HepG2 (cell line): ENCODE measurements at regions of chr5 and their contacts with region 1.

Region 1: DNA sequence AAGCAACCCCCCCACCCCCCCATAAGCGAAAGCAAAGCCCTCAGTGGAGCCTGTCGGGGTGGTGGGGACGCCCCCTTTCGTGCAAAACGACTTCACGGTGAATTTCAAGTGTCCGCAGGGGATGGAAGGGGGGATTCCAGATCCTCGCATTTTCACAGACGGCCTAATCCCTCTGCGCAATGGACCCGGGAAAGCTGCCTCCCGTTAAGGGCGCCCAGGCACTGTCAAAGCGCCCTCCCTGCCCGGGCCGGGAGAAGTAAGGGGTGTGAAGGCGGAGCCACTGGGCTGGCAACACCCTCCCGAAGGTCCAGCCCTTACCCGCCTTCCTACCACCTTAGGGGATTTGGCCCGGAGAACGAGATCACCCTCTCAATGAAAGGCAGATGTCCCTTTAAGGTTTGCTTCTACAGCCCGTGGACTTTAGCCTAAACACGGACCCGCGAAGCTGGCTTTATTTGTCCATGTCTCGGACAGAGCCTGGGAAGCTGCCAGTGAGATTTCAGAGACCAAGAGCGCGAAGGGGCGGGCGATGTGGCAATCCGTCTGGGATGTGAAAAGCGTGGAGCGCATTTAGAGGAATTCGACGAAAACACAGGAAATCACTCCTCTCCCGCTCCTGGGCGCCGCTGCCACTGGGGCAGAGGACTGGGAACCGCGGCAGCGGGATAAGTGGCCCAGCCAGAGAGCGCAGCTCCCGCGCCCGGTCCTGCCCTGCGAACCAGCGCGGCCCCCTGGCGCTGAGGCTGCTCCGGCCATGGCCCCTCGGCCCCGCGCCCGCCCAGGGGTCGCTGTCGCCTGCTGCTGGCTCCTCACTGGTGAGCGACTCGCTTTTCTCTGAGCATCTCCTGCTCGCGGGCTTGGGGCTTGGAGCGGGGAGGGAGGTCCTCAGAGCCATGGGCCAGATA is at the starts of genes ITGA1 and PELO:
- DNase-seq: peak; percentile 86
- ATAC-seq: peak; percentile 92
- H3K4me3 ChIP-seq: peak within 1 kb of the TSS; percentile 76 to 92 (median 77)
- H3K27ac ChIP-seq: peak within 1 kb of the TSS; percentile 73
- H3K4me1 ChIP-seq: peaks cover 48% of the 10 kb centered on the region
- H3K27me3 ChIP-seq: no peaks in the 10 kb centered on the region; a peak in 1 of 5 replicates
- CTCF ChIP-seq: peak; percentile 86
- EP300 ChIP-seq: no peak; a peak in 1 of 4 replicates
- POLR2A ChIP-seq: peak; percentile 35 to 61; a peak in 3 of 4 replicates
- RAD21 ChIP-seq: peak; percentile 90
- total RNA-seq, gene ITGA1: 11.6 and 23.1 TPM in 2 replicates
- total RNA-seq, gene PELO: 19.0 and 19.5 TPM in 2 replicates

Region 2: DNA sequence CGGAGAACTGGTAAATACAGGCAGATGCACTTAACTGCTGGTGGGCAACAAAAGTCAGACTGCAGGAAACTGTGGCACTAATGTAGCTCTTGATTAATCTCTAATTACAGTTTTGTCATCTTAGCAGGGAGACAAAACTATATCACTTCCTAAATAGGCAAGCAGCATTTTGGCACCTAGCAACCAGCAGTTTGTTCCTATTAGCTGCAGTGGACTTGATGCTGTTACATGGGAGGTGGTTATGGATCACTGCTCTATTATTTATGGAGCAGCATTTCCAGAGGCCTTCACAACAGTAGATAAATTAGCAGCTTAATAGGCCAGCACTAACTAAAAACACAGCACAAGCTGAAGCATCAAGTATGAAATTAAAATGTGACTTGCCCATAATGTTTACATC is 518.5 kb before region 1 on chr5:
- CTCF ChIA-PET with region 1: no interaction called
- POLR2A ChIA-PET with region 1: no interaction called
- in situ Hi-C with region 1: no loop called
- intact Hi-C with region 1: no loop called
- DNase-seq: no peak
- ATAC-seq: no peak
- H3K4me3 ChIP-seq: no peak overlapping the region
- H3K27ac ChIP-seq: no peak overlapping the region
- H3K4me1 ChIP-seq: no peaks in the 10 kb centered on the region
- H3K27me3 ChIP-seq: no peaks in the 10 kb centered on the region
- CTCF ChIP-seq: no peak
- EP300 ChIP-seq: no peak
- POLR2A ChIP-seq: no peak
- RAD21 ChIP-seq: no peak

Region 3: GRCh38 chr5:52693280-52693679 is 94.6 kb before region 1 on chr5:
- CTCF ChIA-PET with region 1: no interaction called
- POLR2A ChIA-PET with region 1: no interaction called
- in situ Hi-C with region 1: no loop called
- intact Hi-C with region 1: loop called (anchors 1 kb)
- DNase-seq: peak; percentile 30
- ATAC-seq: peak; percentile 83
- H3K4me3 ChIP-seq: no peak overlapping the region
- H3K27ac ChIP-seq: no peak overlapping the region
- H3K4me1 ChIP-seq: no peaks in the 10 kb centered on the region
- H3K27me3 ChIP-seq: peaks cover 0 to 8% of the 10 kb centered on the region in 2 experiments; a peak in 2 of 5 replicates
- CTCF ChIP-seq: peak; percentile 66
- EP300 ChIP-seq: no peak
- POLR2A ChIP-seq: no peak
- RAD21 ChIP-seq: no peak

Region 4: DNA sequence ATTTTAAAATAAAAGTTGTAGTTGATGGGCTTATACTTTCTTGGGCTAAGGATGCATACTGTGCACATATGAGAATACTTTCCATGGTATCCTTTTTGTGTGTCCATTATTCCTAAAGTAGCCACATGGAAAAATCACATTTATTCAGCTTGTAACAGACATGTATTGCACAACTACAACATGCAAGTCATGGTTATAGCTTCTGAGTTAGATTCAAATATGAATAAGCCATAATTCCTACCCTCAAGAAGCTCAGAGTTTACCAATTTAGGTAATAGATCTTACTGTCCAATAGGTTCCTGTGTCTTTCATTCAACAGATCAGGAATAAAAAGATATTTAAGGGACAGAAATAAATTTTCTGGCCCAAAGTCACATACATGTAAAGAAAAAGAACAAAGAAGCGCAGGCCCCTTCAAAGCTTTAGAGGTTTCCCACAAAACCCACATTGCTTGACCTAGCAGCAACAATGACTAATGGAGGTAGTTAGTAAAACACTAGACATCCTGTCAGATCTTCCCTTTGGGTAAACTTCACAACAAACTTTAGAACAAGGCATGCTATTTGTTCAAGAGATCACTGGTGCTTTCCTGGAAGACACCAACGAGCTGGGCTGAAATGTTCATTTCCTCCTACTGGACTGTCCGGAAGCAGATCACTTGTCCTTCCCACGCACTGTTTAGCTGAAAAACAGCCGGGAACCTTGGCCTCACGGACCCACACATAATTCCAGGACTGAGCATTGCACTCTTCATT is 78.5 kb before region 1 on chr5:
- CTCF ChIA-PET with region 1: no interaction called
- POLR2A ChIA-PET with region 1: interaction called, 9 read pairs
- in situ Hi-C with region 1: loop called (anchors 5 kb)
- intact Hi-C with region 1: loop called (anchors 2 kb)
- DNase-seq: peak; percentile 88
- ATAC-seq: peak; percentile 94
- H3K4me3 ChIP-seq: peak overlapping the region in 2 of 3 experiments; percentile 3 to 37; a peak in 4 of 6 replicates
- H3K27ac ChIP-seq: peak overlapping the region; percentile 70
- H3K4me1 ChIP-seq: peaks cover 65% of the 10 kb centered on the region
- H3K27me3 ChIP-seq: no peaks in the 10 kb centered on the region
- CTCF ChIP-seq: no peak
- EP300 ChIP-seq: peak in 1 of 2 experiments; percentile 91; a peak in 2 of 4 replicates
- POLR2A ChIP-seq: no peak
- RAD21 ChIP-seq: no peak

Region 5: GRCh38 chr5:52799983-52800393 is 12.1 kb after region 1 on chr5:
- CTCF ChIA-PET with region 1: no interaction called
- POLR2A ChIA-PET with region 1: interaction called, 79 read pairs
- in situ Hi-C with region 1: no loop called
- intact Hi-C with region 1: loop called (anchors 1 kb)
- DNase-seq: peak; percentile 86
- ATAC-seq: peak; percentile 86
- H3K4me3 ChIP-seq: peak overlapping the region; percentile 66 to 86 (median 70); a peak in 5 of 6 replicates
- H3K27ac ChIP-seq: peak overlapping the region; percentile 88
- H3K4me1 ChIP-seq: peaks cover 79% of the 10 kb centered on the region
- H3K27me3 ChIP-seq: no peaks in the 10 kb centered on the region; a peak in 1 of 5 replicates
- CTCF ChIP-seq: no peak
- EP300 ChIP-seq: no peak
- POLR2A ChIP-seq: peak; percentile 73 to 85
- RAD21 ChIP-seq: no peak

Region 6: DNA sequence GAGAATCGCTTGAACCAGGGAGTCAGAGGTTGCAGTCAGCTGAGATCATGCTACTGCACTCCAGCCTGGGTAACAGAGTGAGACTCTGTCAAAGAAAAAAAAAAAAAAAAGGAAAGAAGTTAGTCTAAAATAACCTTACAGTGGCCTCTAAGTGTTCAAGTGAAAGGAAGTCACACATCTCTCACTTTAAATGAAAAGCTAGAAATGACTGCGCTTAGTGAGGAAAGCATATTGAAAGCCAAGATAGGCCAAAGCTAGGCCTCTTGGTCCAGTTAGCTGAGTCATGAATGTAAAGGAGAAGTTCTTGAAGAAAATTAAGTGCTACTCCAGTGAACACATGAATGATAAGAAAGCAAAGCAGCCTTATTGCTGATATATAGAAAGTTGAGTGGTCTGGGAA is 38.0 kb after region 1 on chr5:
- CTCF ChIA-PET with region 1: no interaction called
- POLR2A ChIA-PET with region 1: no interaction called
- in situ Hi-C with region 1: no loop called
- intact Hi-C with region 1: no loop called
- DNase-seq: no peak
- ATAC-seq: no peak
- H3K4me3 ChIP-seq: no peak overlapping the region
- H3K27ac ChIP-seq: no peak overlapping the region
- H3K4me1 ChIP-seq: peaks cover 5% of the 10 kb centered on the region; the same call in 1 of the 2 replicates
- H3K27me3 ChIP-seq: no peaks in the 10 kb centered on the region
- CTCF ChIP-seq: no peak
- EP300 ChIP-seq: no peak
- POLR2A ChIP-seq: no peak
- RAD21 ChIP-seq: no peak

Region 7: GRCh38 chr5:52837068-52837467 is 49.2 kb after region 1 on chr5:
- CTCF ChIA-PET with region 1: no interaction called
- POLR2A ChIA-PET with region 1: no interaction called
- in situ Hi-C with region 1: no loop called
- intact Hi-C with region 1: no loop called
- DNase-seq: no peak
- ATAC-seq: no peak
- H3K4me3 ChIP-seq: no peak overlapping the region
- H3K27ac ChIP-seq: no peak overlapping the region
- H3K4me1 ChIP-seq: no peaks in the 10 kb centered on the region
- H3K27me3 ChIP-seq: no peaks in the 10 kb centered on the region
- CTCF ChIP-seq: no peak
- EP300 ChIP-seq: no peak
- POLR2A ChIP-seq: no peak
- RAD21 ChIP-seq: no peak

Region 8: DNA sequence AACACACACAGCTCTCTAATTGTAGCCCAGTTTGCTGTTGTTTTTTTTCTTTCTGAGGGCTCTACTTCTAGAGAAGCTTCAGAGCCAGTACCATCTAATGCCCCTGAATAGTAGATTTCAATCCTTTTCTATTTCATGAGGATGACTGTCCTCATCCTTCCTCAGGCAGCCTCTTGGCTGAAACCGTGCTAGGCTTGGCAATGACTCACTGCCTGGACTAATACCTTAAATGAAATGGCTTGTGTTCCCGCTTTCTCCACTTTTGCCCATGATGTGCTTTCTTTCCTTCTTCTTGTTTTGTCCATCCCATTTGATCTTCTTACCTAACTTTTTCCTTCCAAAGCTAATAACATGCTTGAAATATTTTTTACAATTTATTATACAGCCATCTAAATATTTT is 80.0 kb after region 1 on chr5:
- CTCF ChIA-PET with region 1: no interaction called
- POLR2A ChIA-PET with region 1: no interaction called
- in situ Hi-C with region 1: no loop called
- intact Hi-C with region 1: loop called (anchors 5 kb)
- DNase-seq: no peak
- ATAC-seq: no peak
- H3K4me3 ChIP-seq: no peak overlapping the region
- H3K27ac ChIP-seq: no peak overlapping the region
- H3K4me1 ChIP-seq: peaks cover 9% of the 10 kb centered on the region
- H3K27me3 ChIP-seq: no peaks in the 10 kb centered on the region
- CTCF ChIP-seq: no peak
- EP300 ChIP-seq: no peak
- POLR2A ChIP-seq: no peak
- RAD21 ChIP-seq: no peak

Region 9: DNA sequence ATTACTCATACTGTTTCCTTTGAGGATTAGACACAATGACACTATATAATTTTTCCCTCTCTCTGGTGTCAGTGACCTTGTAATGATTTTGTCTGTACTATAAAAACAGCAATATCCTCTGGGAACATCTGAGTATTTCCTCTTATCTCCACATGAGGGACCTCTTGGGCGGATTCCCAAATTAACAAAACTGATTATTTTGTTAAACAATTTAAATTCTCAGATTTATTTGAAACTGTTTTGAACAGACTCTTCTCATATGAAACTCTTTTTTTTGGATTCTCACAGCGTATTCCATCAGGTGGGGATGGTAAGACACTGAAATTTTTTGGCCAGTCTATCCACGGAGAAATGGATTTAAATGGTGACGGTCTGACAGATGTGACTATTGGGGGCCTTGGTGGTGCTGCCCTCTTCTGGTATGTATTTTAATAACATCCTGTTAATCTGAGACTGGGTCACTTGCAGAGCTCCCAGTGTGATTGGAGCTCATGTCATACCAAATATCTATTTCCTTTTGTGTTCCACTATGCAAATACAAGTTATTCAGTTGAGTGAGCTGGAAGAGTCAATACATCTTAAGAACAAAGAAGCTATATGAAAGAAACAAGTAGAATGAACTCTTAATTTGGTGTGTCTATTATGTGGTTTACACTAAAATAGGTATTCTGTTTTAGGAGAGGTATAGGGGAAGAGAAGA is 127.5 kb after region 1 on chr5:
- CTCF ChIA-PET with region 1: interaction called, 43 read pairs
- POLR2A ChIA-PET with region 1: interaction called, 3 read pairs
- in situ Hi-C with region 1: no loop called
- intact Hi-C with region 1: loop called (anchors 1 kb)
- DNase-seq: peak; percentile 68
- ATAC-seq: peak; percentile 99
- H3K4me3 ChIP-seq: peak overlapping the region; percentile 38 to 62 (median 42); a peak in 4 of 6 replicates
- H3K27ac ChIP-seq: no peak overlapping the region
- H3K4me1 ChIP-seq: no peaks in the 10 kb centered on the region
- H3K27me3 ChIP-seq: no peaks in the 10 kb centered on the region
- CTCF ChIP-seq: peak; percentile 79
- EP300 ChIP-seq: no peak
- POLR2A ChIP-seq: no peak
- RAD21 ChIP-seq: peak; percentile 63; the same call in 1 of the 2 replicates

Region 10: DNA sequence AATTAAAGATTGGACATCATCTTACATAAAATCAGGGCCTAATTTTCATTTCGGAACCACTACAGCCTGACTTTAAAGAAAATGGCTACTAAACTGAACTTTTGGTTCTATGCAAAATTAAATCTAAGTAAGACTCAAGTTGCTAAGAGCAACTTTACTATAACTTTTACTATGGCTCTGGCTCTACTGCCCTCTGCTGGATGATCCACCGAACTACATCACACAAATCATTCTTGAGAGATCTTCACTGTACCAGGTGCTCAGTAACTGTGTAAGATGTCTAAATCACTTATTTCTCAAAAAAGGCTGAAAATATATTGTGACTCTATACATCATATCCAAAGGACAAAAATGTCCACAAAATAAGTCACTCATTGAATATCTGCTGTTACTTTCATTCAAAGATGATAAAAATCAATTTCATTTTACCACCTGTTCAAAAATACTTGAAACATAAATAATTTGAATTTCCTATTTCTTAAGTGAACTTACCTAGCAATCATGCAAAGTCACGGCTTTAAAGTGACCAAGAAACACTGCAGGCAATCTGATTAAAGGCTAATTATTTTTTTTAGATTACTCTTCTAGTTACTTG is 308.2 kb after region 1 on chr5:
- CTCF ChIA-PET with region 1: no interaction called
- POLR2A ChIA-PET with region 1: no interaction called
- in situ Hi-C with region 1: no loop called
- intact Hi-C with region 1: loop called (anchors 5 kb)
- DNase-seq: peak; percentile 56
- ATAC-seq: peak; percentile 31
- H3K4me3 ChIP-seq: no peak overlapping the region
- H3K27ac ChIP-seq: no peak overlapping the region
- H3K4me1 ChIP-seq: peaks cover 27% of the 10 kb centered on the region
- H3K27me3 ChIP-seq: no peaks in the 10 kb centered on the region
- CTCF ChIP-seq: peak; percentile 78
- EP300 ChIP-seq: no peak
- POLR2A ChIP-seq: no peak
- RAD21 ChIP-seq: 0 out of 2 replicates have a peak, but pooled peaks have one; percentile 13